ENCODE measurements at regions of chrX and their contacts with region 1.

Region 1: DNA sequence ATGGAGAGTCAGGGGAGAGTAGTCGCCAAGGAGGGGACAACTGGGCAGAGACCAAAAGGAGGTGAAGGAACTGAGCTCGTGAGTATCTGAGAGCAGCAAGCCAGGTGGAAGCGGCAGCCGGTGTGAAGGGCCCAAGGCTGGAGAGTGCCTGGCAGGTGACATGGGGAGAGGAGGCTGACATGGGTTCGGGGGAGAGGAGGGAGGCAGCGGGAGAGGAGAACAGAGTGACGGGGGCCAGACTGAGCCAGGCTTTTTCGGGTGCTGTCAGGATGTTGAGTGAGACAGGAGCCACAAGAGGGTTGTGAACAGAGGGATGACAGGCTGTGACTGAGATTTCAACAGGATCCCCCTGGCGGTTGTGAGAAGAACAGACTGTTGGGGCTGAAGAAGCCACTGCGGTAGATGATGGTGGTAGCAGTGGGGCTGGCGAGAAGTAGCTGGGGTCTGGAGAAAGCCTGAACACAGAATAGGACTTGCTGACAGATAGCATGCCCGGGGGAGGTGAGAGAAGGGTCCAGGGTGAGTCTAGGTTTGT is 5.7 kb downstream of the ELK1 start:
- DNase-seq: peak; percentile 65
- H3K4me3 ChIP-seq: no peak overlapping the region
- H3K27ac ChIP-seq: no peak overlapping the region
- H3K4me1 ChIP-seq: peaks cover 0 to 5% of the 10 kb centered on the region in 2 experiments; a peak in 1 of 4 replicates
- H3K27me3 ChIP-seq: peaks cover 9% of the 10 kb centered on the region; the same call in 1 of the 2 replicates
- CTCF ChIP-seq: peak; percentile 56
- EP300 ChIP-seq: no peak
- RAD21 ChIP-seq: peak; percentile 37

Region 2: GRCh38 chrX:47497273-47497672 is 147.4 kb before region 1 on chrX:
- CTCF ChIA-PET with region 1: interaction called, 11 read pairs
- POLR2A ChIA-PET with region 1: no interaction called
- DNase-seq: peak; percentile 30
- H3K4me3 ChIP-seq: no peak overlapping the region
- H3K27ac ChIP-seq: no peak overlapping the region
- H3K4me1 ChIP-seq: peaks cover 0 to 3% of the 10 kb centered on the region in 2 experiments; a peak in 1 of 4 replicates
- H3K27me3 ChIP-seq: no peaks in the 10 kb centered on the region
- CTCF ChIP-seq: peak; percentile 60
- EP300 ChIP-seq: no peak
- RAD21 ChIP-seq: peak; percentile 75

Region 3: DNA sequence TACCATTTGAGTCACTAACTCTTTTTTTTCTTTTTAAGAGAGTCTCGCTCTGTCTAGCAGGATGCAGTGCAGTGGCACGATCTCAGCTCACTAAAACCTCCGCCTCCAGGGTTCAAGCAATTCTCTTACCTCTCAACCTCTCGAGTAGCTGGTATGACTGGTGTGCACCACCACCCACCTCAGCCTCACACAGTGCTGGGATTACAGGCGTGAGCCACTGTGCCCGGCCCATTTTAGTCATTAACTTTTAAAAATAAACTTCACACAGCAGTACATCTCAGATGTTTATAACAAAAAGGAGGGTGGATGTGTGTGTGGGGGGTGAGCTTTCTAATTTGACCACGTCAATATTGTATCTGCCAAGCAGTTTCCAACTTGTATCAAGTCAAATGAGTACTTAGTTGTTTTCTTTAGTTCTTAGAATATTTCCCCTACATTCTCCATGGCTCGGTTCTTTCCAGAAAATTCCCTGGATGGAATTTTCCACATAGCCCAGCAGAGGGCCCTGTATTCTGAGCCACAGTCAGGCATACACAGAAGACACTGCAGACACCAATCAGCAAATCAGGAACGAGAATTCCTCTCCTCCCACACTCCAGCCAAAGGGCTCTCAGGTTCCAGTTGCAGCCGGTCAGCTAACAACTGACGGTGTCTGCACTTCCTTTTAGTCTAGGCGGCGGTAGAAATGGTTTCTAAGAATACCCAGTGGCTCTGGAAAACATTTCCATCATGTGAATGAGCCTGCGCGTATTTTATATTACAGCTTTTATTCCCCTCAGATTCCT is 103.7 kb before region 1 on chrX:
- CTCF ChIA-PET with region 1: interaction called, 13 read pairs
- POLR2A ChIA-PET with region 1: no interaction called
- DNase-seq: peak; percentile 80
- H3K4me3 ChIP-seq: no peak overlapping the region; a peak in 1 of 4 replicates
- H3K27ac ChIP-seq: peak overlapping the region; percentile 56 to 64; a peak in 3 of 4 replicates
- H3K4me1 ChIP-seq: peaks cover 0 to 6% of the 10 kb centered on the region in 2 experiments; a peak in 1 of 4 replicates
- H3K27me3 ChIP-seq: no peaks in the 10 kb centered on the region
- CTCF ChIP-seq: peak; percentile 82
- EP300 ChIP-seq: peak in 1 of 2 experiments; percentile 57; a peak in 1 of 4 replicates
- RAD21 ChIP-seq: peak; percentile 70

Region 4: GRCh38 chrX:47608130-47608810 is 36.4 kb before region 1 on chrX:
- CTCF ChIA-PET with region 1: no interaction called
- POLR2A ChIA-PET with region 1: no interaction called
- DNase-seq: no peak
- H3K4me3 ChIP-seq: no peak overlapping the region
- H3K27ac ChIP-seq: no peak overlapping the region
- H3K4me1 ChIP-seq: no peaks in the 10 kb centered on the region
- H3K27me3 ChIP-seq: no peaks in the 10 kb centered on the region; the same call in 1 of the 2 replicates
- CTCF ChIP-seq: no peak
- EP300 ChIP-seq: no peak
- RAD21 ChIP-seq: no peak

Region 5: DNA sequence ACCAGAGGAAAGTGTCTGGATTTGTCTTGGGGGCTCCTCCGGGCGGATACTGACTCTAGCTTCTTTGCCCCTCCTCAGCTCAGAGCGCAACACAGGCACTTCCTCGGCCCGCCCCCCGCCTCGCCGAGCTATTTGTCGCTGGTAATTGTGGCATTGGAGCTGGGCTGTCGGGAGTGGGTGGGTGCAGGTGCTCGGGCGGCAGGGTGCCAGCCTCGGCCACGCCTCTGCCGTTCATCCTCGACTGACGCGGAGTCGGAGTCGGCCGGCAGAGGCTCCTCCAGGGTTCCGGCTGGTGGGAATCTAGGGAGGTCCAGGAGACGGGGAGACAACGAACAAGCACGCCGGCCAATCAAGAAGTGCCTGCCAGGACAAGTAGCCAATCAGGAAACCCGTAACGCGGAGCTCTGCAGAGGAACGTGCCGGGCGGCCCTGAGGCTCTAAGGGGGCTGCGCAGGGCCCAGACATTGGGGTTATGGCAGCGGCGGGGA is 21.0 kb before region 1 on chrX:
- CTCF ChIA-PET with region 1: interaction called, 13 read pairs
- POLR2A ChIA-PET with region 1: interaction called, 3 read pairs
- DNase-seq: peak; percentile 89
- H3K4me3 ChIP-seq: peak overlapping the region; percentile 34 to 54
- H3K27ac ChIP-seq: peak overlapping the region in 1 of 2 experiments; percentile 47; a peak in 1 of 4 replicates
- H3K4me1 ChIP-seq: peaks cover 0 to 9% of the 10 kb centered on the region in 2 experiments; a peak in 1 of 4 replicates
- H3K27me3 ChIP-seq: peaks cover 19% of the 10 kb centered on the region
- CTCF ChIP-seq: no peak
- EP300 ChIP-seq: no peak
- RAD21 ChIP-seq: no peak

Region 6: DNA sequence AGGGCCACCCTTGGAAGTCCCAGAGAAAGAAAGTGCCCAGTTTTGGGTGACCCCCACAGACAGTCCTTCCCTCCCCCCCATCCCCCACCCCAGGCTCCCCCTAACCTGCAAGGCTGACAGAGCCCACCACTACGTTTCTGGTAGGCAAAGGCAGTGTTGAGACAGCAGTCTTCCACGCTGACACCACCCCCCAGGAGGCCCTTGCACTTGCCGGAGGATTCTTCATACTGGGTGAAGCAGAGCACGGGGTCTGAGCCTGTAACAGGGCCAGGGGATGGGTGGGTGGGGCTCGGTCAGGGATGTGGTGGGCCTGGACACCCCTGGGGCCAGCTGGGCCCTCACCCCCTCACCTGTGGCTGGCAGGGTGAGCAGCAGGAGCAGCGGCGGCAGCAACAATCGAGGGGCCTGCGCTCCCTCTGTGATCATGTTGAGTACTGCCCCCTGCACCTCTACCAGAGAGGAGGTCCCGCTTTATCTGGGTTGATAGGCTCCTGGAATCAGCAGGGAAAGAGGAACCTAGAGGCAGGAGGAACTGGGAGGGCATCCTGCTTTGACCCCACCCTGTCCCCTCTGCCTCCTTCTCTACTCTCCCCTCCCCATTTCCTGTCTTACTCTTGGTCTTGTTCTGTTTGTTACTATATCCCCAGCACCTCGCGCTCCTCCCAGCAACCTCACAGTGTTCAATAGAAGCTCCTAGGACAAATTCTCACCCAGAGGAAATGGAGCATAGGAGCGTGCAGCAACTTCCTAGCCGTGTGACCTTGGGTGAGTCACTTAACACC is 15.0 kb before region 1 on chrX and contains the start of gene CFP:
- CTCF ChIA-PET with region 1: interaction called, 14 read pairs
- POLR2A ChIA-PET with region 1: no interaction called
- DNase-seq: no peak
- H3K4me3 ChIP-seq: no peak within 1 kb of the TSS
- H3K27ac ChIP-seq: no peak within 1 kb of the TSS
- H3K4me1 ChIP-seq: no peaks in the 10 kb centered on the region
- H3K27me3 ChIP-seq: peaks cover 6% of the 10 kb centered on the region
- CTCF ChIP-seq: no peak
- EP300 ChIP-seq: no peak
- RAD21 ChIP-seq: no peak
- polyA plus RNA-seq, gene CFP: 0.03 and 0.19 TPM in 2 replicates

Region 7: GRCh38 chrX:47662144-47662657 is 17.6 kb after region 1 on chrX:
- CTCF ChIA-PET with region 1: no interaction called
- POLR2A ChIA-PET with region 1: no interaction called
- DNase-seq: no peak
- H3K4me3 ChIP-seq: no peak overlapping the region
- H3K27ac ChIP-seq: peak overlapping the region in 1 of 2 experiments; percentile 80; a peak in 2 of 4 replicates
- H3K4me1 ChIP-seq: 0 out of 4 replicates have a peak, but pooled peaks cover 0 to 5% of the 10 kb centered on the region in 2 experiments
- H3K27me3 ChIP-seq: no peaks in the 10 kb centered on the region; the same call in 1 of the 2 replicates
- CTCF ChIP-seq: no peak
- EP300 ChIP-seq: no peak
- RAD21 ChIP-seq: no peak

Region 8: GRCh38 chrX:47706575-47706974 is 62.0 kb after region 1 on chrX:
- CTCF ChIA-PET with region 1: no interaction called
- POLR2A ChIA-PET with region 1: no interaction called
- DNase-seq: no peak
- H3K4me3 ChIP-seq: no peak overlapping the region
- H3K27ac ChIP-seq: no peak overlapping the region
- H3K4me1 ChIP-seq: no peaks in the 10 kb centered on the region
- H3K27me3 ChIP-seq: peaks cover 13% of the 10 kb centered on the region; the same call in 1 of the 2 replicates
- CTCF ChIP-seq: no peak
- EP300 ChIP-seq: no peak
- RAD21 ChIP-seq: no peak